KBM-7 (cell line): ENCODE measurements at regions of chr15 and their contacts with region 1.

Region 1: GRCh38 chr15:90603893-90604292 is 74.2 kb downstream of the CRTC3 start:
- DNase-seq: peak; percentile 54

Region 2: DNA sequence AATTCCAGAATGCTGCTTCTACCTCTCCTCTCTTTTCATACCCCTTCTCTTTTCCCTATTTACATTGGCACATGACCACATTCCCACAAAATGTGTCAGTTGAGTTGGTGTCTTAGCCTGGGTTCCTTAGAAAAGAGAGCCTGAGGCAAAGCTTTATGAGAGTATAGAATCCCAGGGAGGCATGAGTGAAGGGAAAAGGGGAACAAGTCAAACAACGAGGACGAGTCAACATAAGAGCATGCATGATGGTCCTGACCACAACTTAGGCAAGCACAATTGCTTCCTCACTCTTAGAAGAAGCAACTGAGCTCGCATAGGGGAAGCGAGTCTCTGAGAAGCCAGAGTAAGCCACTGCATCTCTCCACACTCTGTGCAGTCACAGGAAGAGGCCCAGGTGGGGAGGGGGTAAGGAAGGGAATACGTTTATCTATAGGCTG is 267.2 kb before region 1 on chr15:
- in situ Hi-C with region 1: loop called (anchors 25 kb)
- DNase-seq: peak; percentile 89